ENCODE measurements at regions of chr14 and their contacts with region 1.

Region 1: GRCh38 chr14:60622917-60623257 is 26.4 kb downstream of the SIX1 start:
- DNase-seq: no peak
- ATAC-seq: no peak

Region 2: GRCh38 chr14:60455875-60456274 is 167.0 kb before region 1 on chr14:
- intact Hi-C with region 1: no loop called
- DNase-seq: no peak
- ATAC-seq: no peak

Region 3: DNA sequence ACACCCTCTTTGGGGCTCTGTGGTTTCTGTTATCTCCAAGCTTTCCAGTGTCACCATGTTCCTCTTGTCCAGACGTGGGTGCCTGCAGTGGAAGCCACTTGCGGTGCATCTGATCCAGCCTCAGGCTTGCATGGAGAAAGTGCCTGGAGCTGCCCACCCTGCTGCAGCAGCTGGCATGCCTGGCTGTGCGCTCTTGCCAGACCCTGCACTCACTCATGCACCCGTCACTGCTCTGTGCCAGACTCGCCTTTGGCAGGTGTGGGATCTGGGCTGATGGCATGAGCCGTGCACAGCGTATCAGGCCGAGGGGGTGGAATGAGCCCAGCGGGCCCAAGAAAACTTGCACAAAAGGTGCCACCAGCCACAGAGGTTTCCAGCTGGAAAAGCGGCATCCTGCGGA is 216.8 kb after region 1 on chr14:
- intact Hi-C with region 1: no loop called
- DNase-seq: peak; percentile 20
- ATAC-seq: peak; percentile 66

Region 4: GRCh38 chr14:61025251-61026223 is 402.6 kb after region 1 on chr14:
- intact Hi-C with region 1: loop called (anchors 2 kb)
- DNase-seq: peak; percentile 54
- ATAC-seq: peak; percentile 76